Activated CD8-positive, alpha-beta T cell treated with anti-CD3 and anti-CD28 coated beads for 36 hours (primary cell): ENCODE measurements at regions of chr1 and their contacts with region 1.

Region 1: DNA sequence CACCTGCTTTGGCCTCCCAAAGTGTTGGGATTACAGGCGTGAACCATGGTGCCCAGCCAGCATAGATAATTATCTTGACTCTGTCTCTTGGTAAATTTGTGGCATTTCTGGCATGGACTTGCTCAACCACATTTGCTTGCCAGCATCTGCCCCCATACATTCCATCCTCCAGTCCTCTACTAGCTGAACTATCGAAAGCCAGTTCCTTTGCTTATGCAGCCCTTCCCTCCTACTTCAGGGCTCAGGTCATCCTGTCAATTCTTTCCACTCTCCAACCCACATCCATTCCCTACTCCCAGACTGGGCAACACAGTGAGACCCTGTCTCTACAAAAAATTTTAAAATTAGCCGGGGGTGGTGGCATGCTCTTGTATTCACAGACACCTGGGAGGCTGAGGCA is 13.0 kb upstream of the UQCRHL start:
- DNase-seq: no peak
- ATAC-seq: no peak
- H3K4me3 Mint-ChIP-seq: no peak overlapping the region
- H3K27ac Mint-ChIP-seq: no peak overlapping the region
- H3K4me1 Mint-ChIP-seq: peaks cover 10% of the 10 kb centered on the region
- H3K27me3 Mint-ChIP-seq: no peaks in the 10 kb centered on the region
- CTCF ChIP-seq: no peak

Region 2: GRCh38 chr1:15696956-15697521 is 123.4 kb before region 1 on chr1:
- CTCF ChIA-PET with region 1: no interaction called
- POLR2A ChIA-PET with region 1: no interaction called
- intact Hi-C with region 1: no loop called
- DNase-seq: peak; percentile 68
- ATAC-seq: peak; percentile 89
- H3K4me3 Mint-ChIP-seq: peak overlapping the region; percentile 74
- H3K27ac Mint-ChIP-seq: peak overlapping the region; percentile 94
- H3K4me1 Mint-ChIP-seq: peaks cover 39% of the 10 kb centered on the region
- H3K27me3 Mint-ChIP-seq: no peaks in the 10 kb centered on the region
- CTCF ChIP-seq: no peak

Region 3: GRCh38 chr1:15803354-15803753 is 17.1 kb before region 1 on chr1:
- CTCF ChIA-PET with region 1: interaction called, 16 read pairs
- POLR2A ChIA-PET with region 1: no interaction called
- intact Hi-C with region 1: no loop called
- DNase-seq: peak; percentile 27
- ATAC-seq: peak; percentile 50
- H3K4me3 Mint-ChIP-seq: no peak overlapping the region
- H3K27ac Mint-ChIP-seq: no peak overlapping the region
- H3K4me1 Mint-ChIP-seq: peaks cover 4% of the 10 kb centered on the region
- H3K27me3 Mint-ChIP-seq: peaks cover 1% of the 10 kb centered on the region
- CTCF ChIP-seq: peak; percentile 47

Region 4: DNA sequence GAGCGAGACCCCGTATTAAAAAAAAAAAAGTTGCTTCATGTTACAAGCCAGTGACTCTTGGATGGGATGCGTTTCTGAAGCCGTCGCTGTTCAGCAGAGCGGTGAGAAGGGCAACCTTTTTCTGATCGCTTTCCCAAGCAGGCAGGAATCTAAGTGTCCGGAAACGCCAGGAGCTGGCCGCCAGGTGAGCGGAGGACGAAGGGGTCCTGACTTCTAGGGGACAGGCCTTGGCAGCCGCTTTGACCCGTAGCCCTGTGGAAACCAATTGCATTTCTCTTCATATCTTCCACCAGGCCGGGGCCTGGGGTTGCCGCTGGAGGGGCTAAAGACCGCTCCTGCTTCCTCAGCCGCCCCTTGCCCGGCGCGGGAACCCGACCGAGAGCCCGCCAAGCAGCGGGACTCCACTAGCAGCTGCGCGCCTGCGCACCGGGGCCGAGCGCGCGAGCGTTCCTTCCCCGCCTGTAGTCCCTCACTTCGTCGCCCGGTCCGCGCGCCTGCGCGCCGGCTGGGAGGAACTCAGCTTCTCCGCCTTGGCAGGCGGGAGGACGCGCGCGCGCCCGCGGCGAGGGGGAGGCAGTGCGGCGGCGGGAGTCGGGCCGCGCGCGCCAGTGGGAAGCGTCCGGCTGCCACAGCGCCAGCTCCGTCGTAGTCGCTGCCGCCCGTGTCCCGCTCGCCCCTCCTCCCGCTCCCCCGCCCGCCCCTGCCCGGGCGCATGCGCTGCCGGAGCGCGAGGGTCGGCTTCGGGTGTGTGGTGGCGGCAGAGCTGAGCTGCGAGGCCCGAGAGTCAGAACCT is 26.8 kb after region 1 on chr1 and contains the start of gene SPEN:
- CTCF ChIA-PET with region 1: interaction called, 17 read pairs
- POLR2A ChIA-PET with region 1: interaction called, 3 read pairs
- intact Hi-C with region 1: no loop called
- DNase-seq: peak; percentile 97
- ATAC-seq: peak; percentile 86
- H3K4me3 Mint-ChIP-seq: peak within 1 kb of the TSS; percentile 98
- H3K27ac Mint-ChIP-seq: peak within 1 kb of the TSS; percentile 97
- H3K4me1 Mint-ChIP-seq: peaks cover 38% of the 10 kb centered on the region
- H3K27me3 Mint-ChIP-seq: no peaks in the 10 kb centered on the region
- CTCF ChIP-seq: no peak
- total RNA-seq, gene SPEN: 59.8 to 60.3 TPM

Region 5: DNA sequence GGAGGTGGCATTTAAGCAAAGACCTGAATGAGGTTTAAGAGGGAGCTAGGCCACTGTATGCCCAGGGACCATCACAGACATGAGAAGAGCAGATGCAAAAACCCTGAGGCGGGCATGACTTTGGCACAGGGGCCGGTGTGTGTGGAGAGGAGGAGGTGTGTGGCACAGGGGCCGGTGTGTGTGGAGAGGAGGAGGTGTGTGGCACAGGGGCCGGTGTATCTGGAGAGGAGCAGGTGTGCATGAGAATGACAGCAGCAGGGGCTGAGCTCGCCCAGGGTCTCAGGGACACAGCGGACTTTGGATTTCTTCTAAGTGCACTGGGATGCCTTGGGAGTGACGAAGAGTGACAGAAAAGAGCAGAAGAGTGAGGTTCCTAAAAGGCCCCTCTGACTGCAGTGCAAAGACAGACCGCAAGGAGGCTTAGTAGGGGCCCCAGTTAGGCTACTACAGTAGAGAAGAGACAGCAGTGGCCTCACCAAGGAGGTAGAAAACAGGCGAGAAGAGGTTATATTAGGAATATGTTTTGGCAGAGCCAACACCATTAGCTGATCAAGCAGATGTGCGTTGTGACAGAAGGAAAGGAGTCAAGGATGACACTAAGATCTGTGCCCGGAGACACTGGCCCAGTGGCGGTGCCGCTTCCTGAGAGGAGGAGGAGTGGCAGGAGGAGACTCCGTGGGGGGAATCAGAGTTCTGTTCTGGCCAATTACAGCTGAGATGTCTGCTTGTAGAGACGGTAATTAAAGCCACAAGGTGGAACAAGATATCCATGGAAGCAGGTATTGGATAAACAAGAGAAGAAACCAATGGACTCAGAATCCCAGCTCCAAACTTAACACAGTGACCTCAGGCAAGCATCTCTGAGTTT is 137.0 kb after region 1 on chr1:
- CTCF ChIA-PET with region 1: interaction called, 19 read pairs
- POLR2A ChIA-PET with region 1: interaction called, 3 read pairs
- intact Hi-C with region 1: no loop called
- DNase-seq: no peak
- ATAC-seq: no peak
- H3K4me3 Mint-ChIP-seq: no peak overlapping the region
- H3K27ac Mint-ChIP-seq: peak overlapping the region; percentile 92
- H3K4me1 Mint-ChIP-seq: peaks cover 90% of the 10 kb centered on the region
- H3K27me3 Mint-ChIP-seq: no peaks in the 10 kb centered on the region
- CTCF ChIP-seq: no peak

Region 6: GRCh38 chr1:16009030-16009709 is 188.7 kb after region 1 on chr1:
- CTCF ChIA-PET with region 1: interaction called, 29 read pairs
- POLR2A ChIA-PET with region 1: no interaction called
- intact Hi-C with region 1: no loop called
- DNase-seq: peak; percentile 87
- ATAC-seq: peak; percentile 60
- H3K4me3 Mint-ChIP-seq: no peak overlapping the region
- H3K27ac Mint-ChIP-seq: no peak overlapping the region
- H3K4me1 Mint-ChIP-seq: peaks cover 15% of the 10 kb centered on the region
- H3K27me3 Mint-ChIP-seq: peaks cover 5% of the 10 kb centered on the region
- CTCF ChIP-seq: peak; percentile 99